Vagina (tissue), 2 donors: ENCODE measurements at regions of chr4 and their contacts with region 1.

Region 1: GRCh38 chr4:128191115-128191781 is 96.4 kb downstream of the PGRMC2 start:
- DNase-seq: no peak
- H3K4me3 ChIP-seq: no peak overlapping the region
- H3K27ac ChIP-seq: no peak overlapping the region
- H3K4me1 ChIP-seq: no peaks in the 10 kb centered on the region
- H3K27me3 ChIP-seq: no peaks in the 10 kb centered on the region
- CTCF ChIP-seq: peak; percentile 54 to 74 (median 65)
- POLR2A ChIP-seq: no peak

Region 2: GRCh38 chr4:128177498-128177897 is 13.8 kb before region 1 on chr4:
- intact Hi-C with region 1: no loop called
- DNase-seq: no peak
- H3K4me3 ChIP-seq: no peak overlapping the region
- H3K27ac ChIP-seq: no peak overlapping the region
- H3K4me1 ChIP-seq: no peaks in the 10 kb centered on the region
- H3K27me3 ChIP-seq: no peaks in the 10 kb centered on the region
- CTCF ChIP-seq: no peak
- POLR2A ChIP-seq: no peak

Region 3: GRCh38 chr4:128454281-128455075 is 263.2 kb after region 1 on chr4:
- intact Hi-C with region 1: no loop called
- DNase-seq: peak in 1 of 2 donors; percentile 96
- H3K4me3 ChIP-seq: no peak overlapping the region
- H3K27ac ChIP-seq: peak overlapping the region; percentile 9
- H3K4me1 ChIP-seq: peaks cover 10% of the 10 kb centered on the region
- H3K27me3 ChIP-seq: no peaks in the 10 kb centered on the region
- CTCF ChIP-seq: peak; percentile 45 to 67 (median 58)
- POLR2A ChIP-seq: no peak

Region 4: GRCh38 chr4:128868758-128869157 is 677.5 kb after region 1 on chr4:
- intact Hi-C with region 1: loop called (anchors 5 kb)
- DNase-seq: no peak
- H3K4me3 ChIP-seq: no peak overlapping the region
- H3K27ac ChIP-seq: no peak overlapping the region
- H3K4me1 ChIP-seq: no peaks in the 10 kb centered on the region
- H3K27me3 ChIP-seq: no peaks in the 10 kb centered on the region
- CTCF ChIP-seq: no peak
- POLR2A ChIP-seq: no peak

Region 5: DNA sequence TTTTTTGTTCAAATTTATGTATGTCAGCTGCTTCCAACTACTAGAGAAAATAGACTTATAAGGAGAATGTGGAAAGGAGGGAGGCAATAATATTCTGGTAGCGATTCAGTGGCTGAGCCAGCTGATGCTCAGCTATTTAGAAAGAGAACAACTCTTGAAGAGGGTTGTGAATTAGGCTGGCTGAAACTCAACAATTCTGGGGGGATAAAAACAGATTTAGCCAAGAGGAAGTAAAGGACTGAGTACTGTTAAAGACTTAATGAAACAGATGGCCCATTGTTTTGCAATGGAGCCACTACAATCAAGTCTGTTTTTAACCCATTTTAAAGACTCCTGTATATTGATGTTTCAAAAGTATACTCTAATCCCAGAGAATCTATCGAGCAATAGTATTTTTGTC is 1963.7 kb after region 1 on chr4:
- intact Hi-C with region 1: no loop called
- DNase-seq: no peak
- H3K4me3 ChIP-seq: no peak overlapping the region
- H3K27ac ChIP-seq: no peak overlapping the region
- H3K4me1 ChIP-seq: no peaks in the 10 kb centered on the region
- H3K27me3 ChIP-seq: no peaks in the 10 kb centered on the region
- CTCF ChIP-seq: no peak
- POLR2A ChIP-seq: no peak